ENCODE measurements at regions of chr4 and their contacts with region 1.

Region 1: DNA sequence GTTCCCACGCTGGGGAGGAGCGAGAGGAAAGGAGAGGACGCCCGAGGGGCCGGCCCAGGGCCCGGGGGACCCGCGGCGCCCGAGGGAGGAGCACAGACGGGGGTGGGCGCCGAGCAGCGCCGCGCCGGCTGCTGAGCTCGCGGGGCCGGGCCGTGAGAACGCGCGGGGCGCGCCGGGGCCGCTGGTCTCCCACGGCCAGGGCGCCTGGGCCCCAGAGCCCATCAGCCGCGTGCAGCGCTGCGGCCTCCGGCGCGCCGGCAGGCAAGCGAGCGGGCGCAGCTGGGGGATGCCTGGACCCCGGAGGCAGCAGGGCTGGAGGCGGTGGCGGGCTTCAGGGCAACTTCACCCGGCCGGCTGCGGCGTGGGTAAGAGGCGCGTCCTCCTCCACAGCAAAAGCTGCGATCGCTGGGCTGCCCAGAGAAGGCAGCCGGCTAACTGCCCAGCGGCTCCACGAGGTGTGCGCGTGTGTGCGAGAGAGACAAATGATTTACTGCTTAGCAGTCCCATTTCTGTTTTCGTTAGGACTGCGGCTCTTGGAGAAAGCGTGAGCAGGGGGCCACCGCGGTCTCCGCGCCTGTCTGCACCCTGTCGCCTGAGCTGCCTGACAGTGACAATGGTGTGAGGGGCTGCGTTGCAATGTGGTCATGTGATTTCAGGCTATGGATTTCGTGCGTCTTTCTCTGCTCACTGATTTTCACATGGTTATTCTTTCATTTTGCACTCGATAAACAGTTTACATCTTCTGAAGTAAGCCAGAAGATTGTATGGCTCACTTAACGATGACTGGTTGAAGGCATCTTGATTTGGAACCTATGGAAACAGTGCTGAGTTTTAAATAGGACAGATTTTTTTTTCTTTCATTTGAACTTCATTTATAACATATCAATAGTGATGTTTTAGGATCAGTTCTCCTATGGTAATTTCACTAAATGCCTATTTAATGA is 1.2 kb downstream of the GUCY1A1 start:
- DNase-seq: no peak
- ATAC-seq: peak; percentile 71
- H3K4me3 ChIP-seq: peak overlapping the region; percentile 41
- H3K27ac ChIP-seq: no peak overlapping the region
- H3K4me1 ChIP-seq: no peaks in the 10 kb centered on the region; the same call in 1 of the 2 replicates
- H3K27me3 ChIP-seq: peaks cover 4 to 21% of the 10 kb centered on the region in 2 experiments; a peak in 3 of 4 replicates
- CTCF ChIP-seq: no peak
- EP300 ChIP-seq: no peak
- POLR2A ChIP-seq: peak; percentile 41; the same call in 1 of the 2 replicates
- RAD21 ChIP-seq: no peak

Region 2: GRCh38 chr4:154595807-154596206 is 1072.0 kb before region 1 on chr4:
- CTCF ChIA-PET with region 1: no interaction called
- POLR2A ChIA-PET with region 1: no interaction called
- RAD21 ChIA-PET with region 1: no interaction called
- SMC1A ChIA-PET with region 1: no interaction called
- in situ Hi-C with region 1: no loop called
- intact Hi-C with region 1: no loop called
- DNase-seq: no peak
- ATAC-seq: no peak
- H3K4me3 ChIP-seq: no peak overlapping the region
- H3K27ac ChIP-seq: no peak overlapping the region
- H3K4me1 ChIP-seq: no peaks in the 10 kb centered on the region
- H3K27me3 ChIP-seq: no peaks in the 10 kb centered on the region
- CTCF ChIP-seq: no peak
- EP300 ChIP-seq: no peak
- POLR2A ChIP-seq: no peak
- RAD21 ChIP-seq: no peak

Region 3: DNA sequence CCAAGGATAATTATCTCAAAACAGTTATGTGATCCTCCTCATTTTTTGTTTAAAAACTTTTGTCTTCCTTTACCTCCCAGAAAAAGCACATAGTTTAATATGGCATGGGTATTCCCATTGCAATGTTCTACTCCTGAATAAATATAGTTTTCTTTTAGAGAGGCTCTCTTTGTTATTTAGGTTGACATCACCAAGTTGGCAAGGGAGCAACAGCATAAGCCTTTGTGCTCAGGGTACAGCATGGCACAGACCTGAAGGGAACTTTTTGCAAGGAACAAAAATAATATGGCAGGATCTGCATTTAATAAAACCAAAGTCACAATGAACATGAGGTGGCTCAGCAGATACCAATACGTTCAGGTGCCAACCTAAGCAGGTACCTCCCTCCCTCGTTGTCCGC is 506.5 kb before region 1 on chr4:
- CTCF ChIA-PET with region 1: no interaction called
- POLR2A ChIA-PET with region 1: no interaction called
- RAD21 ChIA-PET with region 1: no interaction called
- SMC1A ChIA-PET with region 1: no interaction called
- in situ Hi-C with region 1: no loop called
- intact Hi-C with region 1: no loop called
- DNase-seq: no peak
- ATAC-seq: no peak
- H3K4me3 ChIP-seq: no peak overlapping the region
- H3K27ac ChIP-seq: no peak overlapping the region
- H3K4me1 ChIP-seq: no peaks in the 10 kb centered on the region
- H3K27me3 ChIP-seq: no peaks in the 10 kb centered on the region
- CTCF ChIP-seq: no peak
- EP300 ChIP-seq: no peak
- POLR2A ChIP-seq: no peak
- RAD21 ChIP-seq: no peak

Region 4: GRCh38 chr4:155629183-155629825 is 38.5 kb before region 1 on chr4:
- CTCF ChIA-PET with region 1: no interaction called
- POLR2A ChIA-PET with region 1: interaction called, 14 read pairs
- RAD21 ChIA-PET with region 1: interaction called, 13 read pairs
- SMC1A ChIA-PET with region 1: interaction called, 7 read pairs
- in situ Hi-C with region 1: no loop called
- intact Hi-C with region 1: no loop called
- DNase-seq: no peak
- ATAC-seq: peak; percentile 19; the same call in 2 of the 3 replicates
- H3K4me3 ChIP-seq: no peak overlapping the region
- H3K27ac ChIP-seq: no peak overlapping the region
- H3K4me1 ChIP-seq: no peaks in the 10 kb centered on the region
- H3K27me3 ChIP-seq: no peaks in the 10 kb centered on the region
- CTCF ChIP-seq: no peak
- EP300 ChIP-seq: no peak
- POLR2A ChIP-seq: no peak
- RAD21 ChIP-seq: no peak

Region 5: DNA sequence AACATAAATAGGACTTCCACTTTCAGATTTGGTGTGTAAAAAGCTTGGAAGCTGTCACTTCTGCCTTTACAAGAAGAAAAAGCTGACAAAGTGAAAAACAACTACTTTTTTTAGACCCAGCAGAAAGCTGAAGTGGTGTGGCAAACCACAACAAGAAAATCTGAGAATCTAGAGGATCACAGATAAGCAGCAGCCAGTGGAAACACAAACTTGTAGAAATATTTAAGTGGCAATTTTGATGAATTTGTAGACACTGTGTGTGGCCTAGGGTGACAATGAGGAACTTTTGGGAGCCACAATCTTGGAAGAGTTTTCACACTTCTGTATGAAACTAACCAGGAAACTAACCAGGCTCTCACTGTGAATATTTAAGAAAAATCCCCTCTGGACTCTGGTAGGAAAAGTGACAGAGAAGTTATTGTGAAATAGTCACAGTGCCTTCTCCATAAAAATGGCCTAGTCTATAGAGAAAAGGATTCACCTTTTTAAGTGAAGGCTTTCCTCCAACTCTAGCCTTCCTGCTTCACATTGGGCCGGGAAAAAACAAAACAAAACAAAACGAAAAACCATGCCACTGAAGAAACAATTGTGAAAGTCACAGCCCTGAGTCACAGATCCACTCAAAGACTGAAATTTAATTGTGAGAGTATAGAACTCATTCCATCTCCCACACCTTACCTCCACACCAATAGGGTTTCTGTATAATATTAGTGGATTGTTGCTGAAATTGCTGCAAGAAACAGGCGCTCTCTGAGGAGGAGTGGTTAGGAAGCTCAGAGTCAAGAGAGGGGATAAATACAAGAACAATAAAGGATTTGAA is 27.9 kb before region 1 on chr4:
- CTCF ChIA-PET with region 1: interaction called, 5 read pairs
- POLR2A ChIA-PET with region 1: interaction called, 10 read pairs
- RAD21 ChIA-PET with region 1: interaction called, 17 read pairs
- SMC1A ChIA-PET with region 1: interaction called, 12 read pairs
- in situ Hi-C with region 1: no loop called
- intact Hi-C with region 1: no loop called
- DNase-seq: peak; percentile 45
- ATAC-seq: peak; percentile 85
- H3K4me3 ChIP-seq: no peak overlapping the region
- H3K27ac ChIP-seq: no peak overlapping the region
- H3K4me1 ChIP-seq: peaks cover 7% of the 10 kb centered on the region
- H3K27me3 ChIP-seq: no peaks in the 10 kb centered on the region
- CTCF ChIP-seq: no peak
- EP300 ChIP-seq: no peak
- POLR2A ChIP-seq: no peak
- RAD21 ChIP-seq: no peak

Region 6: DNA sequence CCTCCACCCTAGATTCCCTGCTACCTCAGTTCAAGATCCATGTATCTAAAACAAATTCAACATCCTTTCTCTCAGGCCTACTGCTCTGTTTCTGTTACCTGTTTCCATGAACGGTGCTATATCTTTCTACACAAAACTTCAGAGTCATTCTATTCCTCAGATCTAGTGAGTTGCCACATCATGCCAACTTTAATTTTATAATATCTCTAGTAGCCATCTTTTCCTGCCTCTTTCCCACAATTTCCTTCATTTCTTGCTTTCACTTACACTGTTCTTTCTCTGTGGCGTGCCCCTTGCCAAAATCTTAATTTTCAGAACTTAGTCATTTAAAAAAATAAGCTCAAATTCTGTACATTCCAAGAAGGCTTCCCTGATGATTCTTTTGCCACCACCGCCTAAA is 14.0 kb after region 1 on chr4:
- CTCF ChIA-PET with region 1: interaction called, 3 read pairs
- POLR2A ChIA-PET with region 1: interaction called, 7 read pairs
- RAD21 ChIA-PET with region 1: interaction called, 7 read pairs
- SMC1A ChIA-PET with region 1: interaction called, 25 read pairs
- in situ Hi-C with region 1: no loop called
- intact Hi-C with region 1: no loop called
- DNase-seq: no peak
- ATAC-seq: no peak
- H3K4me3 ChIP-seq: no peak overlapping the region
- H3K27ac ChIP-seq: no peak overlapping the region
- H3K4me1 ChIP-seq: no peaks in the 10 kb centered on the region
- H3K27me3 ChIP-seq: no peaks in the 10 kb centered on the region
- CTCF ChIP-seq: no peak
- EP300 ChIP-seq: no peak
- POLR2A ChIP-seq: no peak
- RAD21 ChIP-seq: no peak

Region 7: DNA sequence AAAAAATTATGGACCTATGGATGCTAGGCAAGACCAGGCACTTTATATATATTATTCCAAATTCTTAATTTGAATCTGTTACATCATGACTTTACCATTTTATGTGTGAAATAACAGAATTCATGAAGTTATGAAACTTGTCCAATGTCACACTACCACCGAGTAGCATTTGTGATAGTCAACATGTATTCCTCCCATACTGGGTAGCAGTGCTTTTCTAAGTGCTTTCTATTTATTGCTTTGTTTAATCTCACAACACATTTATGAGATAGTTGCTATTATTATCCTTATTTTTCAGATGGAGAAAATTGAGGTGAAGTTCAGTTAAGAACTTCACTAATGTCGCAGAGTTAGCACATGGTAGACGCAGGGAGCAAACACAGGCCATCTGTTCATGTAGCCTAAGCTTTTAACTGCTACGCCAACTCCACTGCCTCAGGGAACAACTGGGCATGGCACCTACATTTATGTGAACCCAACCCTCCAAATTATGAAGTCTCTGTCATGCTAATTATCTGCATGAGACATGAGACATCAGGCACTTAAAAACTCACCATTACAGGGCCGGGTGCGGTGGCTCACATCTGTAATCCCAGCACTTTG is 19.6 kb after region 1 on chr4:
- CTCF ChIA-PET with region 1: interaction called, 3 read pairs
- POLR2A ChIA-PET with region 1: interaction called, 4 read pairs
- RAD21 ChIA-PET with region 1: interaction called, 8 read pairs
- SMC1A ChIA-PET with region 1: interaction called, 52 read pairs
- in situ Hi-C with region 1: no loop called
- intact Hi-C with region 1: no loop called
- DNase-seq: no peak
- ATAC-seq: no peak
- H3K4me3 ChIP-seq: no peak overlapping the region
- H3K27ac ChIP-seq: no peak overlapping the region
- H3K4me1 ChIP-seq: no peaks in the 10 kb centered on the region
- H3K27me3 ChIP-seq: no peaks in the 10 kb centered on the region
- CTCF ChIP-seq: no peak
- EP300 ChIP-seq: no peak
- POLR2A ChIP-seq: no peak
- RAD21 ChIP-seq: no peak

Region 8: GRCh38 chr4:155693015-155693663 is 25.3 kb after region 1 on chr4:
- CTCF ChIA-PET with region 1: interaction called, 9 read pairs
- POLR2A ChIA-PET with region 1: interaction called, 4 read pairs
- RAD21 ChIA-PET with region 1: interaction called, 8 read pairs
- SMC1A ChIA-PET with region 1: interaction called, 52 read pairs
- in situ Hi-C with region 1: no loop called
- intact Hi-C with region 1: no loop called
- DNase-seq: no peak
- ATAC-seq: peak; percentile 25; the same call in 2 of the 3 replicates
- H3K4me3 ChIP-seq: no peak overlapping the region
- H3K27ac ChIP-seq: no peak overlapping the region
- H3K4me1 ChIP-seq: no peaks in the 10 kb centered on the region
- H3K27me3 ChIP-seq: no peaks in the 10 kb centered on the region
- CTCF ChIP-seq: no peak
- EP300 ChIP-seq: no peak
- POLR2A ChIP-seq: no peak
- RAD21 ChIP-seq: no peak

Region 9: DNA sequence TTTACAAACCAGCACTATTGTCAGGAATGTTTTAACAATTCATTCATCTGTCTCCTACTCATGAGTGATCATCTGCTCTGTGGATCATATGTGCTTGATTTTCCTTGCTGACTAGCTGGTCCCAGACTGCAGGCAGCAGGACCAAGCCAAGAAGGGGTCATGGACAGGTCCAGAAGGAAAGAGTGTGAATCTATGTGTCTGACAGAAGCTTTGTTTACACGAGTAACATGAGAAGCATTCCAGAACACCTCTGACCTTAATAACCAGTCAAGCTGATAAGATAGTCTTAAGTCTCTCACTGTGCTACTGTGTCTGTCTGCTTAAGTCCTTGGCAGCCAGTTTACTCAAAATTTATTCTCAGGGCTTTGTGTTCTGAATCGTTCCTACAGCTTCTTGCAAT is 37.8 kb after region 1 on chr4:
- CTCF ChIA-PET with region 1: interaction called, 5 read pairs
- POLR2A ChIA-PET with region 1: interaction called, 9 read pairs
- RAD21 ChIA-PET with region 1: interaction called, 13 read pairs
- SMC1A ChIA-PET with region 1: interaction called, 57 read pairs
- in situ Hi-C with region 1: no loop called
- intact Hi-C with region 1: no loop called
- DNase-seq: no peak
- ATAC-seq: no peak
- H3K4me3 ChIP-seq: no peak overlapping the region
- H3K27ac ChIP-seq: no peak overlapping the region
- H3K4me1 ChIP-seq: no peaks in the 10 kb centered on the region
- H3K27me3 ChIP-seq: no peaks in the 10 kb centered on the region
- CTCF ChIP-seq: no peak
- EP300 ChIP-seq: no peak
- POLR2A ChIP-seq: no peak
- RAD21 ChIP-seq: no peak

Region 10: GRCh38 chr4:155854597-155855226 is 186.9 kb after region 1 on chr4:
- CTCF ChIA-PET with region 1: no interaction called
- POLR2A ChIA-PET with region 1: no interaction called
- RAD21 ChIA-PET with region 1: no interaction called
- SMC1A ChIA-PET with region 1: no interaction called
- in situ Hi-C with region 1: no loop called
- intact Hi-C with region 1: no loop called
- DNase-seq: no peak
- ATAC-seq: peak; percentile 65
- H3K4me3 ChIP-seq: no peak overlapping the region
- H3K27ac ChIP-seq: no peak overlapping the region
- H3K4me1 ChIP-seq: no peaks in the 10 kb centered on the region
- H3K27me3 ChIP-seq: no peaks in the 10 kb centered on the region
- CTCF ChIP-seq: no peak
- EP300 ChIP-seq: no peak
- POLR2A ChIP-seq: no peak
- RAD21 ChIP-seq: no peak